Caco-2 (cell line): ENCODE measurements at regions of chrX and their contacts with region 1.

Region 1: GRCh38 chrX:40175511-40176350 is 78.0 kb upstream of the BCOR start:
- DNase-seq: peak; percentile 63 to 67
- H3K4me3 ChIP-seq: peak overlapping the region; percentile 59
- H3K4me3 Mint-ChIP-seq: peak overlapping the region; percentile 87
- H3K27ac Mint-ChIP-seq: peak overlapping the region; percentile 93
- H3K4me1 ChIP-seq: peaks cover 11% of the 10 kb centered on the region
- H3K4me1 Mint-ChIP-seq: no peaks in the 10 kb centered on the region
- H3K27me3 ChIP-seq: no peaks in the 10 kb centered on the region
- H3K27me3 Mint-ChIP-seq: no peaks in the 10 kb centered on the region
- CTCF ChIP-seq: no peak

Region 2: DNA sequence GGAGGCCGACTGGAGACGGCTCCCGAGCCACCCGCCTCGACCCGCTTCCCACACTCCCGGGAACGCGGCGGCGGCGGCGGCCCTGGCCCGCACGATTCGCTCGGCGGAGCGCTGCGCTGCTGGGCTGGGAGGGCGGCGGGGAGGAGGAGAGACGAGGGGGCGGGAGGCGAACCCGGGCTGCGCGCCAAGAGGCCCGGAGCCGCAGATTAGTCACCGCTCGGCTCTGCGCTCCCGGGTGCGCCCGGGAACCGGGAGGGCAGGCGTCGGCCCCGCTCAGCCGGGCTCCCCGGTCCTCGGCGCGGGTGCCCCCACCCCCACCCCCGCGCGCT is 66.8 kb before region 1 on chrX:
- CTCF ChIA-PET with region 1: no interaction called
- POLR2A ChIA-PET with region 1: interaction called, 10 read pairs
- intact Hi-C with region 1: no loop called
- DNase-seq: peak in 1 of 2 experiments; percentile 61
- H3K4me3 ChIP-seq: peak overlapping the region; percentile 66
- H3K4me3 Mint-ChIP-seq: peak overlapping the region; percentile 76
- H3K27ac Mint-ChIP-seq: no peak overlapping the region
- H3K4me1 ChIP-seq: peaks cover 2% of the 10 kb centered on the region; the same call in 1 of the 2 replicates
- H3K4me1 Mint-ChIP-seq: peaks cover 6% of the 10 kb centered on the region
- H3K27me3 ChIP-seq: no peaks in the 10 kb centered on the region
- H3K27me3 Mint-ChIP-seq: no peaks in the 10 kb centered on the region
- CTCF ChIP-seq: no peak

Region 3: DNA sequence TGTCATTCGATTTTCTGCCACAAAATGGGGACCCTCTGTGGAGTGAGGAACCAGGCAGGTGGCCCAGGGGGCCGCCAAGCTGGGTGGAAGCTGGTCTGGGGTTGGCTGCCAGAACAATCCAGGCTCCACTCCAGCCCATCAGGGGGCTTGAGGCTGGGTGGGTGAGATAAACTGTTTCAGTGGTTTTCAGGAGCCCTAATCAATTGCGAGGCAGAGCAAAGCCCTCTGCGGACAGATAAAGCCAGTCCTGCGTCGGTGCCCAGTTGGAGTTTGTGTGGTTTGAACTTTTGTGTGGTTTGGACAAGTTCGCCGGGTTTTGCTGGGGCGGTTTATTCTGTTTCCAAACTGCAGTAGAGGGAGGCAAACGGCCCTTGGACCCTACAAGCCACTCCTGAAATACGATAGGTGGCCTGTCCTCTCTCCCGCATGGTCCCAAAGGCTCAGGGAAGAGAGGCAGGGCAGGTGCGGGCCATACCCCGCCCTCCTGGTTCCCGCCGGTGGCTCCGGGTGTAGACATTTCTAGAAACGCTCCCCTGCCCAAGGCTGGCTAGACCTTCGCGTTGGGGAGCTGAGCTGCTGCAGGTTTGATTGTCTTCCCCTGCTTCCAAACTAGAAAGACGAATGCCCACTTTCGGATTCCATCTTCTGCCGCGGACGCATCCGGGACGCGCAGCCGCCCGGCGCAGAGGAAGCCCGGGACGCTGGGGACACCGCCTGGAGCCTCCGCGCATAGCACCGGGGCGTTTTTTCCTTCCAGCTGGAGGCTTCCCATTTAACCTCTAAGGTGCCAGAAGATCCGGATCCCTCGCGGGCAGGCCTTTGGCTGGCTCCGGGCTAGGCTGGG is 91.0 kb after region 1 on chrX:
- CTCF ChIA-PET with region 1: interaction called, 3 read pairs
- POLR2A ChIA-PET with region 1: no interaction called
- intact Hi-C with region 1: loop called (anchors 2 kb)
- DNase-seq: peak; percentile 64 to 76
- H3K4me3 ChIP-seq: peak overlapping the region; percentile 52
- H3K4me3 Mint-ChIP-seq: peak overlapping the region; percentile 63
- H3K27ac Mint-ChIP-seq: peak overlapping the region; percentile 34
- H3K4me1 ChIP-seq: peaks cover 16% of the 10 kb centered on the region; the same call in 1 of the 2 replicates
- H3K4me1 Mint-ChIP-seq: no peaks in the 10 kb centered on the region
- H3K27me3 ChIP-seq: no peaks in the 10 kb centered on the region
- H3K27me3 Mint-ChIP-seq: no peaks in the 10 kb centered on the region
- CTCF ChIP-seq: peak; percentile 49 to 67

Region 4: GRCh38 chrX:40298572-40299479 is 123.1 kb after region 1 on chrX:
- CTCF ChIA-PET with region 1: no interaction called
- POLR2A ChIA-PET with region 1: interaction called, 3 read pairs
- intact Hi-C with region 1: loop called (anchors 2 kb)
- DNase-seq: peak; percentile 30 to 44
- H3K4me3 ChIP-seq: peak overlapping the region; percentile 8; the same call in 1 of the 2 replicates
- H3K4me3 Mint-ChIP-seq: peak overlapping the region; percentile 67
- H3K27ac Mint-ChIP-seq: peak overlapping the region; percentile 82
- H3K4me1 ChIP-seq: peaks cover 41% of the 10 kb centered on the region
- H3K4me1 Mint-ChIP-seq: peaks cover 21% of the 10 kb centered on the region
- H3K27me3 ChIP-seq: no peaks in the 10 kb centered on the region
- H3K27me3 Mint-ChIP-seq: no peaks in the 10 kb centered on the region
- CTCF ChIP-seq: peak; percentile 19 to 39

Region 5: DNA sequence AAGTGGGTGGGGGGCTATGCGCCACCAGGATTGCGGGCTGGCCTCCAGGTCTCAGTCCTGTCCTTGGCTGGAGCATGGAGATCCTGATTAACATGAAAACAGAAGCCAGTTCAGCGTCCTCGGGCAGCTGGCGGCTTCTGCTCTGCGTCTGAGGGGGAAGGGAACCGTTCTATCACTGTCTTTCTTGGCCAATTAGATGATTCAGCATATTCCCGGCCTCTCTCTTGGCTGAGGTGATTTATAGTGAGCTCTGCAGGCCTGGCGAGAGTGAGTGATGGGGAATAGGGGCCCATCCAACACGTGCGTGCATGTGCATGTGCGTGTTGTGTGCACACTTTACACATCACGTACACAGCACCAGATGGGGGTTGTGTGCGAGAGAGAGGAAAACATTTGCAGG is 259.2 kb after region 1 on chrX:
- CTCF ChIA-PET with region 1: no interaction called
- POLR2A ChIA-PET with region 1: no interaction called
- intact Hi-C with region 1: no loop called
- DNase-seq: no peak
- H3K4me3 ChIP-seq: no peak overlapping the region
- H3K4me3 Mint-ChIP-seq: no peak overlapping the region
- H3K27ac Mint-ChIP-seq: no peak overlapping the region
- H3K4me1 ChIP-seq: no peaks in the 10 kb centered on the region
- H3K4me1 Mint-ChIP-seq: no peaks in the 10 kb centered on the region
- H3K27me3 ChIP-seq: no peaks in the 10 kb centered on the region
- H3K27me3 Mint-ChIP-seq: no peaks in the 10 kb centered on the region
- CTCF ChIP-seq: no peak

Region 6: GRCh38 chrX:40474200-40474626 is 298.5 kb after region 1 on chrX:
- CTCF ChIA-PET with region 1: no interaction called
- POLR2A ChIA-PET with region 1: interaction called, 14 read pairs
- intact Hi-C with region 1: loop called (anchors 1 kb)
- DNase-seq: peak; percentile 86 to 87
- H3K4me3 ChIP-seq: peak overlapping the region; percentile 20
- H3K4me3 Mint-ChIP-seq: peak overlapping the region; percentile 69
- H3K27ac Mint-ChIP-seq: peak overlapping the region; percentile 94
- H3K4me1 ChIP-seq: peaks cover 28% of the 10 kb centered on the region
- H3K4me1 Mint-ChIP-seq: peaks cover 36% of the 10 kb centered on the region
- H3K27me3 ChIP-seq: no peaks in the 10 kb centered on the region
- H3K27me3 Mint-ChIP-seq: no peaks in the 10 kb centered on the region
- CTCF ChIP-seq: no peak

Region 7: GRCh38 chrX:41906515-41907165 is 1730.9 kb after region 1 on chrX:
- CTCF ChIA-PET with region 1: no interaction called
- POLR2A ChIA-PET with region 1: interaction called, 10 read pairs
- intact Hi-C with region 1: no loop called
- DNase-seq: no peak
- H3K4me3 ChIP-seq: no peak overlapping the region
- H3K4me3 Mint-ChIP-seq: no peak overlapping the region
- H3K27ac Mint-ChIP-seq: no peak overlapping the region
- H3K4me1 ChIP-seq: no peaks in the 10 kb centered on the region
- H3K4me1 Mint-ChIP-seq: no peaks in the 10 kb centered on the region
- H3K27me3 ChIP-seq: no peaks in the 10 kb centered on the region
- H3K27me3 Mint-ChIP-seq: no peaks in the 10 kb centered on the region
- CTCF ChIP-seq: no peak